Sigmoid colon (tissue), 7 donors: ENCODE measurements at regions of chr16 and their contacts with region 1.

Region 1: DNA sequence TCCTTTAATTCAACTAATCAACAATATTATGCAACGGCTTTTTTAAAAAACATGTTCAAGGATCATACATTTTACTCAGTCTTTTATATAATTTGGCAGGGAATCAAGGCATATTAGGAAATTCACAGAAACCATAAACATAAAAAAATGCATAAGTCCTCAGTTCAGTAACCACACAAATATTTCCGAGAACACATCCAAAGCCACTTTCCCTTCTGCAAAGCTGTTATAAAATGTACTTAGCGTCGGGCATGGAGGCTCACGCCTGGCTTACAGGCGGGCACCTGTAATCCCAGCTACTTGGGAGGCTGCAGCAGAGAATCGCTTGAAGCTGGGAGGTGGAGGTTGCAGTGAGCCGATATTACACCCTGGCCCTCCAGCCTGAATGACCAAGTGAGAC is 9.7 kb upstream of the ZC3H7A start:
- DNase-seq: no peak
- H3K4me3 ChIP-seq: no peak overlapping the region
- H3K27ac ChIP-seq: no peak overlapping the region
- H3K4me1 ChIP-seq: no peaks in the 10 kb centered on the region
- H3K27me3 ChIP-seq: no peaks in the 10 kb centered on the region
- CTCF ChIP-seq: no peak
- EP300 ChIP-seq: no peak
- POLR2A ChIP-seq: no peak

Region 2: GRCh38 chr16:11396241-11397048 is 410.3 kb before region 1 on chr16:
- intact Hi-C with region 1: loop called (anchors 5 kb)
- DNase-seq: peak; percentile 84
- H3K4me3 ChIP-seq: no peak overlapping the region
- H3K27ac ChIP-seq: no peak overlapping the region
- H3K4me1 ChIP-seq: peaks cover 0 to 3% (median 0%) of the 10 kb centered on the region in 4 donors
- H3K27me3 ChIP-seq: no peaks in the 10 kb centered on the region
- CTCF ChIP-seq: peak; percentile 88 to 100 (median 96)
- EP300 ChIP-seq: no peak
- POLR2A ChIP-seq: no peak